AG04450 (cell line): ENCODE measurements at regions of chr6 and their contacts with region 1.

Region 1: GRCh38 chr6:79570129-79571029 is 33.1 kb upstream of the LCA5 start:
- DNase-seq: no peak
- H3K4me3 ChIP-seq: no peak overlapping the region
- H3K27ac ChIP-seq: no peak overlapping the region
- H3K27me3 ChIP-seq: no peaks in the 10 kb centered on the region
- CTCF ChIP-seq: peak; percentile 77

Region 2: DNA sequence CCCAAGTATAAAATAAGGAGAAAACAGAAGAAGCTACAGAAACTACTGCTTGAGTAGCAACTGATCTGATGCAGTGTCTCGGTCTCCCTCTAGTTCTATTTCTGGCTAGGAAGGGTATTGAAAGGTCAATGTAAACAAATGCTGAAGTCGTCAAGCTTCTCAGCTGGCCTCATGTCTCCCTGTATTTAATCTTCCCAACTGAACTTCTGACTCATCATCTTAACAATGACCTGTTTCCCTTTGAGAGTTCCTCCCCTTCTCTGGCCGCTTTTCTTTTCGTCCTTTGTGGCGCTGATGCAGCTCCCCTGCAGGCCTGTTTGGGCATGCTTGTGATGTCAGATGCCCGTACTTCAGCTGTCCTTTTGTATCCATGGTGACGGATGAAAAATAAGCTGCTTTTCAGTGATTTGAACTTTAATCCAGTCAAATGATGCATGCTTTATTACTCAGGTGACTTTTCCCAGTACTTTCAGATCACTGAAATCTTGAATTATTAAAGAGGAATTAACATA is 25.4 kb before region 1 on chr6:
- CTCF ChIA-PET with region 1: interaction called, 10 read pairs
- POLR2A ChIA-PET with region 1: no interaction called
- DNase-seq: peak; percentile 94
- H3K4me3 ChIP-seq: no peak overlapping the region
- H3K27ac ChIP-seq: peak overlapping the region; percentile 23
- H3K27me3 ChIP-seq: no peaks in the 10 kb centered on the region
- CTCF ChIP-seq: peak; percentile 74

Region 3: GRCh38 chr6:79665725-79666551 is 95.6 kb after region 1 on chr6:
- CTCF ChIA-PET with region 1: interaction called, 97 read pairs
- POLR2A ChIA-PET with region 1: no interaction called
- DNase-seq: no peak
- H3K4me3 ChIP-seq: no peak overlapping the region
- H3K27ac ChIP-seq: no peak overlapping the region
- H3K27me3 ChIP-seq: no peaks in the 10 kb centered on the region
- CTCF ChIP-seq: no peak

Region 4: DNA sequence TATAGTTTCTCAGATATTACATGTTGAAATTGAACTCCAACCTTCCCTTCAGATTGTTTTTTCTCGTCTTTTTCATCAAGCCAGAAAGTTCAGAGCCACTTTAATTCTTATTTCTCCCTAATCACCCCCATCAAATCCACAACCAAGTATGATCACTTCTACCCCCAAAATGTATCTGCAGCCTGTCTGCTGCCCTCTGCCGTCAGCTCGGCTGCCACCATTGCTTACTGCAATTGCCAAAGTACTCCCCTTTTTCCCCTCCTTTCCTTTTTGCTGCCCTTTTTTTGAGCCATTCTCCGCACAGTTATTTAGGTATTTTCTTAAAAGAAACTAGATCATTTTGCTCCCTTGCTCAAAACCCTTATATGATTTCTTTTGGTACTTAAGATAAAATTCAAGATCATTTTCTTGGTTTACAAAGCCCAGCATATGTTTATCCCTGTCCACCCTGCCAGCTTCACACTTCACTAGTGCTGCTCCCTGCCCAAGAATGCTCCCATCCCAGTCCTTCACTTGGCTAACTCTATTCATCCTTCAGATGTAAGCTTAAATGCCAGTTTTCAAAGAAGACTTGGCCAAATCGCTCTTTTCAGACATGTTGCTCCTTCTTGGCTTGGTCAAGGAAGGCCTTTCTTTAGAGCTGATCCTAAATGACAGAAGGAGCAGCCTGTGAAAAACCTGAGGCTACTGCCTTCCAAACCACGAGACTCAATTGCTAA is 124.4 kb after region 1 on chr6:
- CTCF ChIA-PET with region 1: interaction called, 12 read pairs
- POLR2A ChIA-PET with region 1: no interaction called
- DNase-seq: no peak
- H3K4me3 ChIP-seq: no peak overlapping the region
- H3K27ac ChIP-seq: no peak overlapping the region
- H3K27me3 ChIP-seq: no peaks in the 10 kb centered on the region
- CTCF ChIP-seq: peak; percentile 41

Region 5: DNA sequence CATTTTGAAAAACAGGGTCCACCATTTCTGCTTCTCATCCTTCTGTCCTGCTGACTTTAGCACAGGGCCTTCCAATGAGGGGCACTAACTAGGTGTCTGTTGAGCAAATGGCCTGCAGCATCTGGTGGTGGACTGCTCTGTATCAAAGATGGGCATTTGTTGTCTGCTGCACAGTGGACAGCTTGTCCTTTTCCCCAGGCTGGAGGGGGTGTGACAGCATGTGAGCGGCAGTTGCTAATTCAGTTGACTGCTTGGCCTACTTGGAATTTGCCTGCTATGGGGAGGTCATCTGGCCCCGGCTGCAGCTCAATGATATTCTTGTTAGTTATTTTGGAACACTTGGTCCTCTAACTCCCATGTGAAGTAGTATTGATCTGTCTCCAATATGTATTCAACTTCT is 154.4 kb after region 1 on chr6:
- CTCF ChIA-PET with region 1: no interaction called
- POLR2A ChIA-PET with region 1: interaction called, 10 read pairs
- DNase-seq: no peak
- H3K4me3 ChIP-seq: no peak overlapping the region
- H3K27ac ChIP-seq: no peak overlapping the region
- H3K27me3 ChIP-seq: no peaks in the 10 kb centered on the region
- CTCF ChIP-seq: no peak